GM10248 (cell line): ENCODE measurements at regions of chr13 and their contacts with region 1.

Region 1: DNA sequence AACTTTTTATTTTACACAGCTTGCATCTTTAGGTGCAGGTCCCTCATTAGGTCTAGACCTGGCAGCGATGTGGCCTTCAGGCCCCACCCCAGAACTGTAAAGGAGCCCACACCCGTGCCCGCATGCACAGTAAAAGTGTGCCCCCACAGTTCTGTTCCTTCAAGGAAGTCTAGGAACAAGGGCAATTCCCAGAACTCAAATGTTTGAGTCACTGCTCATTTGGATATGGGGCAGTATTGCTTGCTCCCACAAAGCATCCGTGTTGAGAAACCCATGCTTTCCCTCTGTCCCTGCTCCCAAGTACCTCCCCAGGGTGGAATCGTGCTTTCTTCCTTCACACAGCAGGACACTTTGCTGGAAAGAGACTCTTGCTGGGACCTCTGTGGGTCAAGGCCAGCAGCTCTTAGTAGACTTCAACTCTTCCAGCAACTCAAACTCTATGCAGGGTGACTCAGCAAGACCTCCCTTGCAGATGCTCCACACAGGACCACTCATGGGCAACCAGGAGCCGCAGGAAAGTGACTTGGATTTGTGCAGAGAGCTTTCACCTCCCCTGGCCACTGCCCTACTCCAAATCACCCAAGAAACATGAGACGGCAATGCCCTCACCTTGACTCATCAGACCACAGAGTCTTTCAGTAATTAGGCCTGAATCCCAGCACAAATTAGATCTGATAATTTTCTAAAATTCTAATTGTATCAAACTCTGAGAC is 12.3 kb downstream of the SLC7A1 start:
- DNase-seq: no peak
- CTCF ChIP-seq: no peak

Region 2: GRCh38 chr13:29573190-29573589 is 10.0 kb before region 1 on chr13:
- CTCF ChIA-PET with region 1: interaction called, 12 read pairs
- POLR2A ChIA-PET with region 1: no interaction called
- DNase-seq: peak; percentile 34
- CTCF ChIP-seq: no peak

Region 3: GRCh38 chr13:29664591-29664990 is 81.4 kb after region 1 on chr13:
- CTCF ChIA-PET with region 1: no interaction called
- POLR2A ChIA-PET with region 1: no interaction called
- DNase-seq: no peak
- CTCF ChIP-seq: no peak